SK-N-SH (cell line): ENCODE measurements at regions of chr15 and their contacts with region 1.

Region 1: DNA sequence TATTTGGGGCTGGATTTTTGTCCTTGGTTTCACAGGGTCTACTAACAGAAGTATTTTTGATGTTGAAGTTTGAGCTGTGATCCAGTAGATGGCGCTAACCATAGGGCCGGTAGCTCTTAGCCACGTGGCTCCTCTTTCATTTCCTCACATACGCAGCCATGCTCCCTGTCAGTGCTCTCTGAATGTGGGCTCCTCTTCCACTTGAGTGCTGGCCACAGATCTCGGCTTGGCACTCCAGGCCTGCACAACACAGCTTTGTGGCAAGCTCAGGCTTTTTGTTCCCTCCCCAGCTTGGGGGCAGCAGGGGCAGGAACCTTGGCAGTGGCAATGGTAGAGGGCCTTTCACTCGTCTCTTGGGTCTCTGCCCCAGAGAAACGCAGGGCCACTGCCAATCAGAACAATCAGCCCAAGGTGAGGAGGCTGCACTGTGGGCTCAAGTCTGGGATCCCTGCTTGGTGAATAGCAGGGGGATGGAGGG is 18.6 kb upstream of the DNAAF4 start:
- DNase-seq: peak; percentile 51
- H3K4me3 ChIP-seq: no peak overlapping the region
- H3K27ac ChIP-seq: no peak overlapping the region
- H3K4me1 ChIP-seq: peaks cover 0 to 5% of the 10 kb centered on the region in 2 experiments; a peak in 1 of 4 replicates
- H3K27me3 ChIP-seq: no peaks in the 10 kb centered on the region
- CTCF ChIP-seq: peak; percentile 68
- EP300 ChIP-seq: no peak
- RAD21 ChIP-seq: peak; percentile 69

Region 2: DNA sequence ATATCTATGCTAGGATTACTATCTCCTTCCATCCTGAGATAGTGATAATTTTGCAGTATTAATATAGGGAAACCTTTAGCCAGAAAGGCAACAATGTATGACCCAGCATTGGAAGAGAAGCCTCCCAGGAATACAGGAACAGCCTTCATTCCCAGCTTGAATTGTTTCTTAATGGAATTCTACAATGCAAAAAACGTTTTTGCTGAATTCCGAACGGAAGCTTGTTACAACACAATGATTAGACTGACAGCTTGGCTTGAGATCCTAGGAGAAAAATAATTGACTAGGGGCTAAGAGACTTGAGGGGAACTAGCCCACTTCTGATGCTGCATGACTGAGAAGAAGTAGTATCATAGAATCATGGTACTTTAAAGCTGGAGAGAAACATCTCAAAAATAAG is 470.1 kb before region 1 on chr15:
- CTCF ChIA-PET with region 1: no interaction called
- POLR2A ChIA-PET with region 1: no interaction called
- DNase-seq: no peak
- H3K4me3 ChIP-seq: no peak overlapping the region
- H3K27ac ChIP-seq: no peak overlapping the region
- H3K4me1 ChIP-seq: no peaks in the 10 kb centered on the region
- H3K27me3 ChIP-seq: no peaks in the 10 kb centered on the region
- CTCF ChIP-seq: no peak
- EP300 ChIP-seq: no peak
- RAD21 ChIP-seq: no peak

Region 3: DNA sequence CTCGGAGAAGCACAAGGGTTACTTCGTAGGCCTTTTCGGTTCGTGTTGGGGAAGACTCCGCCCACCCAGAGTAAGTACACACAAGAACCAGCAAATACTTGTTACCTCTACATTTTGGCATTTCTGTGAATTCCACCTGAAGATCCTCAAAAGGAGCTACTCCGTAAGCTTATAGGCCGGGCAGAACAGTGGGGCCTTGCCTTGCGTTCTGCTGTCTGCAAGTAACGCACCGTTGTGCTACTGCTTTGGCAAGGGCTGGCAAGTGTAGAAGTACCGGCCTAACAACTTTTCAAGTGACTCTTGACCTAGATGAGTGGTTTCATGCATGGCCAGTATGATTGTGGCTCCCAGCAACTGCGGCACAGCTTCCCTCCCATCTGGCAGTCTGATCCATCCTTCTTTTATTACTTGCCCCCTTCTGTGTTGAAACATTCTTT is 12.2 kb before region 1 on chr15:
- CTCF ChIA-PET with region 1: interaction called, 22 read pairs
- POLR2A ChIA-PET with region 1: no interaction called
- DNase-seq: no peak
- H3K4me3 ChIP-seq: no peak overlapping the region
- H3K27ac ChIP-seq: no peak overlapping the region
- H3K4me1 ChIP-seq: no peaks in the 10 kb centered on the region
- H3K27me3 ChIP-seq: no peaks in the 10 kb centered on the region
- CTCF ChIP-seq: no peak
- EP300 ChIP-seq: no peak
- RAD21 ChIP-seq: no peak

Region 4: GRCh38 chr15:55637086-55637485 is 110.5 kb after region 1 on chr15:
- CTCF ChIA-PET with region 1: interaction called, 24 read pairs
- POLR2A ChIA-PET with region 1: no interaction called
- DNase-seq: no peak
- H3K4me3 ChIP-seq: no peak overlapping the region
- H3K27ac ChIP-seq: no peak overlapping the region
- H3K4me1 ChIP-seq: no peaks in the 10 kb centered on the region
- H3K27me3 ChIP-seq: no peaks in the 10 kb centered on the region
- CTCF ChIP-seq: no peak
- EP300 ChIP-seq: no peak
- RAD21 ChIP-seq: no peak